SK-N-SH (cell line): ENCODE measurements at regions of chr9 and their contacts with region 1.

Region 1: DNA sequence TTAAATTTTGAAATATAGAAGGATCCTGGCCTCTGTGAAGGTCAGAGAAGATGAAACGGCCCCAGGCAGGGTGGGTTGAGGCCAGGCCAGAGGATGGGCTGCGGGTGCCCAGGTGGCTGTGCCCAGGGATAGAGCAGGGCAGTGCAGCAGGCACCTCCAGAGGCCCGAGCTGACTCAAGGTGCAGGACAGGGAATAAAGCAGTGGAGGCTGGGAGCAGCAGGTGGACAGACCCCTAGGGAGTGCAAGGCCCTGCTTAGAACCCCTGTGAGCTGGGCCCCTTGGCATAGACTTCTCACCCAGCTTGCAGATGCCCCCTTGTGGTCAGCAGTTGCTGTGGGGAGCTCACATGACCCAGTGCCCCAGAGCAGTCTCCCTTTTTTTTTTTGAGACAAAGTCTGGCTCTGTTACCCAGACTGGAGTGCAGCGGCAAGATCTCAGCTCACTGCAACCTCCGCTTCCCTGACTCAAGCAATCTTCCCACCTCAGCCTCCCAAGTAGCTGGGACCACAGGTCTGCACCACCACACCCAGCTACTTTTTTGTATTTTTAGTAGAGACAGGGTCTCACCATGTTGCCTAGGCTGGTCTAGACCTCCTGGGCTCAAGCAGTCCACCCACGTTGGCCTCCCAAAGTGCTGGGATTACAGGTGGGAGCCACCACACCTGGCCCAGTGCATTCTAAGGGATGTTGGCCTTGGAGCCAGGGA is 118.8 kb downstream of the WNK2 start:
- DNase-seq: peak; percentile 88
- H3K4me3 ChIP-seq: no peak overlapping the region
- H3K27ac ChIP-seq: no peak overlapping the region
- H3K4me1 ChIP-seq: peaks cover 0 to 13% of the 10 kb centered on the region in 2 experiments; a peak in 1 of 4 replicates
- H3K27me3 ChIP-seq: no peaks in the 10 kb centered on the region
- CTCF ChIP-seq: peak; percentile 67
- EP300 ChIP-seq: no peak
- RAD21 ChIP-seq: peak; percentile 69

Region 2: DNA sequence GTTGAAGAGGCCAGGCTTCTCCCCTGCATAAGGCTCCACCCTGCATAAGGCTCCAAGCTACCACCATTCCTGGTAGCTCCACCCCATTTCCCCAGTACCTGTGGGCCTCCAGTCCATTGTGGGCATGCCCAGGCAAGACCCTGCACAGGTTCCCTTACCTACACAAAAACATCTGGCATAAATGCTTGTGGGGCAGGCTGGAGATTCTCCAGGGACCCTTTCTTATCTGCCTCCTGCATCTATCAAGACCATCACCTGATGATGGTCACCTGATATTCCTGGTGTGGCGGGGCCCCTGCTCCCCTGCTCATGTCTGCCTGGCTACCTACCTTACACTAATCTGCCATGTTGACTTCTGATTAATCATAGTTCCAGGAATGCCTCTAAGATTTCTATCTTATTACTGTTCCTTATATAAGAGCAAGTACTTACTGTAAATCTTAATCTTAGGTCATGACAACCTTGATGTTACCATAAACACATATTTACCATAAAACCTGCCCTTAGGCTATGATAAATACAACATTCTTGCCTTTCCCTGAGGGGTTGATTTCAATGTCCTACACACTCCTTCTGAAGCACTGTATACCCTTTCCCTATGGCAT is 314.4 kb before region 1 on chr9:
- CTCF ChIA-PET with region 1: no interaction called
- POLR2A ChIA-PET with region 1: no interaction called
- DNase-seq: no peak
- H3K4me3 ChIP-seq: no peak overlapping the region
- H3K27ac ChIP-seq: no peak overlapping the region
- H3K4me1 ChIP-seq: no peaks in the 10 kb centered on the region; a peak in 1 of 4 replicates
- H3K27me3 ChIP-seq: no peaks in the 10 kb centered on the region
- CTCF ChIP-seq: no peak
- EP300 ChIP-seq: no peak
- RAD21 ChIP-seq: no peak

Region 3: DNA sequence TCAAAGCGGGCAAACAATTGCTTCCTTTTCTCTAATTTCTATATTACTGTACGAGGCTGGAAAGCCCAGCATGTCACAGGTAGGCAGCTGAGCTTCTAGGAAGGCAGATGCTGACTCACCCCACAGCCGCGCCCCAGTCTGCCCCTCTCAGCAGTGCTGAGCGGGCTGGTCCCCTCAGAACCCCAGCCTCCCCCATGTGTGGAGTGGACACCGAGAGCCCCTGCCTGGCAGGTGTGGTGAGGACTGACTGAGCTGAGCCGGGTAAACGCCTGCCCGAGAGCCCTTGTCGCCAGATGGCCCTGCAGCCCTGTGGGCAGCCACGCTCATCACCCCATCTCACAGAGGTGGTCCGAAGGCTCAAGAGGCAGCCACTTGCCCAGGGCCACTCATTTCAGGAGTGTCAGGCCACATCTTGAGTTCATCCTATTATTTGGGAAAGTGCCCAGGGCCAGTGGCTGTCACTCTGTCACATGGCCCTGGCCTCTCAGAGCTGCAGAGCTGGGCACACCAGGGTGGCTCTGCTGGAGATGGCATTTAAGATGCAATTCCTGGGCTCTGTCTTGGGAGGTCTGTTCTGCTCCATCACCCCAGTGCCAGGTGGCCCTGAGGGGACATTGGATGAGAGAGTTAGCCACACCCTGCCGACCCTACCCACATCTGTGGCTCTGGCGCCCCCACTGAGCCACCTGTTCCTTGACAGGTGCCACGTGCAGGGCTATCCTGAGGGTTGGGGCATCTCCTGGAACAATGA is 194.2 kb before region 1 on chr9:
- CTCF ChIA-PET with region 1: interaction called, 16 read pairs
- POLR2A ChIA-PET with region 1: no interaction called
- DNase-seq: no peak
- H3K4me3 ChIP-seq: no peak overlapping the region
- H3K27ac ChIP-seq: no peak overlapping the region; a peak in 1 of 4 replicates
- H3K4me1 ChIP-seq: peaks cover 0 to 9% of the 10 kb centered on the region in 2 experiments; a peak in 1 of 4 replicates
- H3K27me3 ChIP-seq: no peaks in the 10 kb centered on the region
- CTCF ChIP-seq: no peak
- EP300 ChIP-seq: no peak
- RAD21 ChIP-seq: no peak

Region 4: DNA sequence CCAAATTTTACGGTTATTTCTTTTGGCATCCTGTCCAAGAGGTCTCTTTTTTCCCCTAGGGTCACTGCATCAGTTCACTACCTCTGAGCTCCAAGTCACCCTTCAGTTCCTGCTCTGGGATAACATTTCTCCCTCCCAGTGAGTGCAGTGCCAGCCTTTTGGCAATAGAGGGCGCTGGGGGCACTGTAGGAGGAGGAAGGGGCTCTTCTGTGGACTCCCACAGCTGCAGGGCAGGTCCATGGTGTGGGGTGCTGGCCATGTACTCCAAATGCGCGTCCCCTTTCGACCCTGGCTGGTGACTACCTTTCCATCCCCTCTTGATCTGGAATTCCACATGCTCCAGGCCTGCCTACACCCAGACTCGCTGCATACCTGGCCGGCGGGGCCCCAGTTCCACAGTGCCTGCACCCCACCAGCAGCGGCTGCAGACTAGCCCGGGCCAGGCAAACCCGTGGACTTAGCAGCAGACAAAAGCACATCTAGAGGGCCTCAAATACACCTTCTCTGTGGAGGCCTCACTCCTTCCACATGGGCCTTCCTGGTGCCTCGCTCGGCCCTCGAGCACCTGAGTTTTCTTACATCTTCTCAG is 148.3 kb before region 1 on chr9:
- CTCF ChIA-PET with region 1: interaction called, 91 read pairs
- POLR2A ChIA-PET with region 1: no interaction called
- DNase-seq: peak; percentile 80
- H3K4me3 ChIP-seq: no peak overlapping the region
- H3K27ac ChIP-seq: no peak overlapping the region
- H3K4me1 ChIP-seq: peaks cover 0 to 11% of the 10 kb centered on the region in 2 experiments; a peak in 1 of 4 replicates
- H3K27me3 ChIP-seq: no peaks in the 10 kb centered on the region
- CTCF ChIP-seq: peak; percentile 66
- EP300 ChIP-seq: no peak
- RAD21 ChIP-seq: peak; percentile 61

Region 5: GRCh38 chr9:93159601-93160471 is 142.9 kb before region 1 on chr9:
- CTCF ChIA-PET with region 1: interaction called, 91 read pairs
- POLR2A ChIA-PET with region 1: no interaction called
- DNase-seq: peak; percentile 97
- H3K4me3 ChIP-seq: peak overlapping the region in 1 of 2 experiments; percentile 36; a peak in 1 of 4 replicates
- H3K27ac ChIP-seq: no peak overlapping the region
- H3K4me1 ChIP-seq: peaks cover 0 to 24% of the 10 kb centered on the region in 2 experiments; a peak in 2 of 4 replicates
- H3K27me3 ChIP-seq: no peaks in the 10 kb centered on the region
- CTCF ChIP-seq: peak; percentile 95
- EP300 ChIP-seq: no peak
- RAD21 ChIP-seq: peak; percentile 99

Region 6: GRCh38 chr9:93183609-93184431 is 118.9 kb before region 1 on chr9 and contains the start of gene WNK2:
- CTCF ChIA-PET with region 1: interaction called, 10 read pairs
- POLR2A ChIA-PET with region 1: no interaction called
- DNase-seq: peak; percentile 96
- H3K4me3 ChIP-seq: peak within 1 kb of the TSS in 1 of 2 experiments; percentile 55; a peak in 3 of 4 replicates
- H3K27ac ChIP-seq: peak within 1 kb of the TSS in 1 of 2 experiments; percentile 76; a peak in 1 of 4 replicates
- H3K4me1 ChIP-seq: peaks cover 0 to 56% of the 10 kb centered on the region in 2 experiments; a peak in 2 of 4 replicates
- H3K27me3 ChIP-seq: peaks cover 15% of the 10 kb centered on the region
- CTCF ChIP-seq: no peak
- EP300 ChIP-seq: no peak
- RAD21 ChIP-seq: no peak
- polyA plus RNA-seq, gene WNK2: 0.12 and 0.36 TPM in 2 replicates

Region 7: DNA sequence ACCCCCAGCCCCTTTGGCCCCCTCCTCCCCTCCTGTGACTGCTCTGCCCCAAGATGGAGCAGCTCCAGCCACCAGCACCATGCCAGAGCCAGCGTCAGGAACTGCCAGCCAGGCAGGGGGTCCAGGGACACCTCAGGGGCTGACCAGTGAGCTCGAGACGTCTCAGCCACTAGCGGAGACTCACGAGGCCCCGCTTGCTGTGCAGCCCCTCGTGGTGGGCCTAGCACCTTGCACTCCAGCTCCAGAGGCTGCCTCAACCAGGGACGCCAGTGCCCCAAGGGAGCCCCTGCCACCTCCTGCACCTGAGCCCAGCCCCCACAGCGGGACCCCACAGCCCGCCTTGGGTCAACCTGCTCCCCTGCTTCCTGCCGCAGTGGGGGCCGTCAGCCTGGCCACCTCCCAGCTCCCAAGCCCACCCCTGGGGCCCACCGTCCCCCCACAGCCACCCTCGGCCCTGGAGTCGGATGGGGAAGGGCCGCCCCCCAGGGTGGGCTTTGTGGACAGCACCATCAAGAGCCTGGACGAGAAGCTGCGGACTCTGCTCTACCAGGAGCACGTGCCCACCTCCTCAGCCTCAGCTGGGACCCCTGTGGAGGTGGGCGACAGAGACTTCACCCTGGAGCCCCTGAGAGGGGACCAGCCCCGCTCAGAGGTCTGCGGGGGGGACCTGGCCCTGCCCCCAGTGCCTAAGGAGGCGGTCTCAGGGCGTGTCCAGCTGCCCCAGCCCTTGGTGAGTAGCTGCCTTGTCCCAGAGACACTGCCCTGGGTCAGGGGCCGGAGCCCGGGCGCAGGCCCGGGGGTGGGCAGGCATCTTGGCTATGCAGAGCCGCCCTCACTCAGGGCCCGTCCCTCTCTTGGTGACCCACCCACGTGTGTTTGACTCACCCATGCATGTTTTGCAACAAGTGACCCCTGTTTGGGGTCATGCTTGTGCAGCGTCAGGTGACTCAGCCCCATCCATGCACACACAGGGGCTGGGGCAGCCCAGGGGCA is 13.5 kb before region 1 on chr9:
- CTCF ChIA-PET with region 1: interaction called, 15 read pairs
- POLR2A ChIA-PET with region 1: no interaction called
- DNase-seq: peak; percentile 27
- H3K4me3 ChIP-seq: no peak overlapping the region
- H3K27ac ChIP-seq: no peak overlapping the region
- H3K4me1 ChIP-seq: no peaks in the 10 kb centered on the region; a peak in 1 of 4 replicates
- H3K27me3 ChIP-seq: no peaks in the 10 kb centered on the region
- CTCF ChIP-seq: no peak
- EP300 ChIP-seq: no peak
- RAD21 ChIP-seq: no peak

Region 8: DNA sequence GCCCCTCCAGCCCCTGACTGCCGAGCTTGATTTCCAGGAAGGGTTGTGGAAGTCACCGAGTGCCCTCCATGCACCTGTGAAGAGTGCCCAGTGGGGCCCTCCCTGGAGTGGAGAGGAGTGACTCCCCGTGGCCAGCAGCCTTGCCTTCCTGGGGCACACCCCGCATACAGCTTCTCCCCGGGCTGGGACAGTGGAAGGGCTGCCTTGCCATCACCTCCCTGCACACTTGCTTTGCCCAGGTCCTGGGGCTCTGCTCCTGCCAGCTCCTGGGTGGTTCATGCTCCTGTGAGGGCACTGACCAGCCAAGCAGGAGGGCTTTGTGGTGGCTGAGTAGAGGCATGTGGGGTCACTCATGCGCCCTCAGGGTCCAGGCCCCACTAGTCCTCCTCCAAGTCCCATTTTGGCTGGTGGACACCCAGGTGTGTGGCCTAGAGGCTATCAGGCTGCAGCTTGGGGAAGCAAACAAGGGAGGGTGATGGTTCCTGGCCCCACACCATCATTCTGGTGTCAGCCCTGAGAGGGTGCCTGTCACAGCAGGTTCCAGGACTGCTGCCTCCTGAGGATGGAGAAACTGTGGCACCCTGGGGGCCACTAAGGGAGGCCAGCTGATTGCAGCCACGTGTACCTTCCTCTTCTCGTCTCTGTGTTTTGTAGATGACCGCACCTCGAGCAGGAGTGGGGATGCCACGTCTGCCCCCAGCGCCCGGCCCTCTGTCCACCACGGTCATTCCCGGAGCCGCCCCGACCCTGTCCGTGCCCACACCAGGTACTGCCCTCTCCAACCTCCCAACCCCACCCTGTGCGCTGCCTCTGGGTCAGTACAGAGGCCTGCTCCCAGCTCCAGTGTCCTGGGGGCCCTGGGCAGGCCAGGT is 14.4 kb after region 1 on chr9:
- CTCF ChIA-PET with region 1: interaction called, 19 read pairs
- POLR2A ChIA-PET with region 1: interaction called, 3 read pairs
- DNase-seq: no peak
- H3K4me3 ChIP-seq: no peak overlapping the region
- H3K27ac ChIP-seq: no peak overlapping the region
- H3K4me1 ChIP-seq: peaks cover 0 to 32% of the 10 kb centered on the region in 2 experiments; a peak in 1 of 4 replicates
- H3K27me3 ChIP-seq: no peaks in the 10 kb centered on the region
- CTCF ChIP-seq: no peak
- EP300 ChIP-seq: no peak
- RAD21 ChIP-seq: no peak